ENCODE measurements at regions of chr3 and their contacts with region 1.

Region 1: GRCh38 chr3:12994607-12995388 is 78.4 kb downstream of the IQSEC1 start:
- DNase-seq: peak; percentile 90
- H3K4me3 ChIP-seq: peak overlapping the region; percentile 92
- H3K27ac ChIP-seq: peak overlapping the region; percentile 95
- H3K4me1 ChIP-seq: peaks cover 63% of the 10 kb centered on the region
- H3K27me3 ChIP-seq: no peaks in the 10 kb centered on the region
- CTCF ChIP-seq: peak; percentile 93

Region 2: DNA sequence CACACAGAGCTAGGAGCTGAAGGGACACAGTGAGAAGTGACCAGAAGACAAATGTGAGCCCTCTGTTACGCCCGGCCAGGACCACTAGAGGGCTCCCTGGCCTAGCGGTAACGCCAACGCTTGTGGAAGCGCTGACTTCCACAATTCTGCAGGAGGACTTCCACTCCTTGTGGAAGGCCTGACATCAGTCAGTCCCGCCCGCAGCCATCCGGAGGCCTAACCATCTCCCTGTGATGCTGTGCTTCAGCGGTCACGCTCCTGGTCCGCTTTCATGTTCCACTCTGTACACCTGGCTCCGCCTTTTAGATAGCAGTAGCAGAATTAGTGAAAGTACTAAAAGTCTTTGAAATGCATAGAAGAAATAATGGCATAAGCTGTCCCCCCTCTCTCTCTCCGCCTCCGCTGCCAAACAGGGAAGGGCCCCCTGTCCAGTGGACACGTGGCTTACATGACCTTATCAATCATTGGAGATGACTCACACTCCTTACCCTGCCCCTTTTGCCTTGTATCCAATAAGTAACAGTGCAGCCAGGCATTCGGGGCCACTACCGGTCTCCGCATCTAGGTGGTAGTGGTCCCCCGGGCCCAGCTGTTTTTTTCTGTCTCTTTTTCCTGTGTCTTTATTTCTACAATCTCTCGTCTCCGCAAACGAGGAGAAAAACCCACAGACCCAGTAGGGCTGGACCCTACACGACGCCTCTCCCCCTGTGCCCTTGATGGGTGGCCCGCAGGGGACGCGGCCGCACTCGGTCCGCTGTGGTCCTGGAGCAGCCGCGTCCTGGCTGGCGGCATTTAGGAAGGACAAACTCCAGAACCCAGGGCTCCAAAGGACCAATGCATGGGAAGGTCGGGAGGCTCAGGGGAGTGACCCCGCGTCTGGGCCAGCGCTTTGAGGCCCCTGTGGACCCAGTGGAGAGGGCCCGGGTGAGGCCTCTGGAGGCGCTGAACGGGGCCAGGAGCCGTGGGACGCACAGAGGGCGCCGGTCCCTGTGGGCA is 126.5 kb before region 1 on chr3:
- intact Hi-C with region 1: loop called (anchors 10 kb)
- DNase-seq: peak; percentile 84
- H3K4me3 ChIP-seq: peak overlapping the region; percentile 52
- H3K27ac ChIP-seq: no peak overlapping the region
- H3K4me1 ChIP-seq: peaks cover 12% of the 10 kb centered on the region
- H3K27me3 ChIP-seq: peaks cover 16% of the 10 kb centered on the region
- CTCF ChIP-seq: peak; percentile 96

Region 3: GRCh38 chr3:13141991-13142412 is 147.2 kb after region 1 on chr3:
- intact Hi-C with region 1: no loop called
- DNase-seq: no peak
- H3K4me3 ChIP-seq: no peak overlapping the region
- H3K27ac ChIP-seq: no peak overlapping the region
- H3K4me1 ChIP-seq: no peaks in the 10 kb centered on the region
- H3K27me3 ChIP-seq: peaks cover 39% of the 10 kb centered on the region
- CTCF ChIP-seq: no peak